ENCODE measurements at regions of chr3 and their contacts with region 1.

Region 1: GRCh38 chr3:50568947-50569749 is at the start of gene HEMK1:
- DNase-seq: peak; percentile 94
- H3K4me3 Mint-ChIP-seq: peak within 1 kb of the TSS; percentile 91
- H3K27ac Mint-ChIP-seq: peak within 1 kb of the TSS; percentile 95
- H3K4me1 Mint-ChIP-seq: no peaks in the 10 kb centered on the region
- H3K27me3 Mint-ChIP-seq: no peaks in the 10 kb centered on the region
- CTCF ChIP-seq: no peak
- total RNA-seq, gene HEMK1: 19.9 and 23.8 TPM in 2 replicates

Region 2: DNA sequence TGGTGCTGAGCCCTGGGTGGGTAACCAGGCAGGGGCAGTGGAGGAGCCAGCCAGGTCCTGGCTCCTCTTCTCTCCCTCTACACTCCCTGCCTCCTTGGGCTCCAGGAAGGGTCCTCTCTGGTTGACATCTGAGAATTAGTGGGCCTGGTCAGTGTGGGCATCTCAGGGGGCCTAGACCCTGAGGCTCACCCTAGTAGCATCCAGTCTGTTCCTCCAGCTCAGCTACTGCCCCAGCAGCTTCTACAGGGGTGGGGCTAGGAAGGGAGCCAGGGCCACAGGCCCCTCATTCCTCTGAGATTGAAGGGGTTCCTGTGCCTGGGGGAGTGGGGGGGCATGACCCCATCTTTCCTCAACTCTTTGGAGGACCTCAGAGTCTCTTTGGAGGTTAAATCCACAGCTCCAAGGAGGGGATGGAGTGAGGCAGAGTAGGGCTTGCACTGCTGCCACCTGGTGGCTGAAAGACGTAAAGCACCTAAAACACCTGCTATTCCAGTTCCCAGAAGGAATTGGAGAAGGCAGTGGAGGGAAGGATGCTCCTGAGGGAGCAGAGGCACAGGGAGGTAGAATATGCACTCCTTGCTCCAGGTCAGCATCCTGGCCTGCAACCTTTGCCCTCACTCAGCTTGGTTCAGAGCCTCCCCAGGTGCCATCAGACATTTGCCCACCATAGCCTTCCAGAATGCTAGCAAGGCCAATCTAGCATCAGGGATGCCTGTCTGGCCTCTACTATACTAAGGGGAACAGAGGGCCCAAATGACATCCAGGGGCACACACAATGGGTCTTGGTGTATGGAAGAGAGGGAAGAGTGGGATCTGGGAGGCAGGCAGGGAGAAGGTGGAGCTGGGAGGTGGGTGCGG is 26.7 kb before region 1 on chr3:
- CTCF ChIA-PET with region 1: interaction called, 11 read pairs
- POLR2A ChIA-PET with region 1: interaction called, 3 read pairs
- intact Hi-C with region 1: no loop called
- DNase-seq: peak; percentile 69
- H3K4me3 Mint-ChIP-seq: no peak overlapping the region
- H3K27ac Mint-ChIP-seq: no peak overlapping the region
- H3K4me1 Mint-ChIP-seq: no peaks in the 10 kb centered on the region
- H3K27me3 Mint-ChIP-seq: peaks cover 18% of the 10 kb centered on the region
- CTCF ChIP-seq: peak; percentile 73

Region 3: GRCh38 chr3:50587806-50588758 is 18.9 kb after region 1 on chr3:
- CTCF ChIA-PET with region 1: interaction called, 33 read pairs
- POLR2A ChIA-PET with region 1: interaction called, 7 read pairs
- intact Hi-C with region 1: no loop called
- DNase-seq: no peak
- H3K4me3 Mint-ChIP-seq: no peak overlapping the region
- H3K27ac Mint-ChIP-seq: no peak overlapping the region
- H3K4me1 Mint-ChIP-seq: peaks cover 18% of the 10 kb centered on the region
- H3K27me3 Mint-ChIP-seq: no peaks in the 10 kb centered on the region
- CTCF ChIP-seq: no peak

Region 4: GRCh38 chr3:50639055-50639494 is 69.9 kb after region 1 on chr3:
- CTCF ChIA-PET with region 1: no interaction called
- POLR2A ChIA-PET with region 1: no interaction called
- intact Hi-C with region 1: no loop called
- DNase-seq: no peak
- H3K4me3 Mint-ChIP-seq: no peak overlapping the region
- H3K27ac Mint-ChIP-seq: no peak overlapping the region
- H3K4me1 Mint-ChIP-seq: peaks cover 21% of the 10 kb centered on the region
- H3K27me3 Mint-ChIP-seq: no peaks in the 10 kb centered on the region
- CTCF ChIP-seq: no peak

Region 5: DNA sequence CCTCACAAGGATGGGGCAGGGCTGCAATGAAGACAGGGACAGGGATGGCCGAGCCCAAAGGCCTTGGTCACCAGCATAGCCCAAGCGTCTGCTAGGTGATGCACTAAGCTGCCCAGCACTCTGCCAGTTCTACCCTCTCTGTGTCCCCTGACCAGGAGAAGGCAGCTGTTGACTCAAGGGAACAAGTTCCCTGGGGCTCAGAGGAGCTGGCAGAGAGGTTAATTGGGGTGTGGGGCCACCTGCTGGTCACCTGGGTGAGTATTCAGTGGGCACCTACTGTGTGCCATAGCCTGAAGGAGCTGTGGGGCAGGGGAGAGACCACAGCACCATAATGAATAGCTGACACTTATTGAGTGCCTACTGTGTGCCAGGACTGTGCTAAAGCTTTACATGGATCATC is 83.6 kb after region 1 on chr3:
- CTCF ChIA-PET with region 1: interaction called, 7 read pairs
- POLR2A ChIA-PET with region 1: no interaction called
- intact Hi-C with region 1: loop called (anchors 10 kb)
- DNase-seq: peak; percentile 60
- H3K4me3 Mint-ChIP-seq: no peak overlapping the region
- H3K27ac Mint-ChIP-seq: no peak overlapping the region
- H3K4me1 Mint-ChIP-seq: no peaks in the 10 kb centered on the region
- H3K27me3 Mint-ChIP-seq: no peaks in the 10 kb centered on the region
- CTCF ChIP-seq: peak; percentile 71